Posterior vena cava (tissue), 2 donors: ENCODE measurements at regions of chr2 and their contacts with region 1.

Region 1: GRCh38 chr2:124836430-124836829 is 811.3 kb downstream of the CNTNAP5 start:
- DNase-seq: no peak

Region 2: DNA sequence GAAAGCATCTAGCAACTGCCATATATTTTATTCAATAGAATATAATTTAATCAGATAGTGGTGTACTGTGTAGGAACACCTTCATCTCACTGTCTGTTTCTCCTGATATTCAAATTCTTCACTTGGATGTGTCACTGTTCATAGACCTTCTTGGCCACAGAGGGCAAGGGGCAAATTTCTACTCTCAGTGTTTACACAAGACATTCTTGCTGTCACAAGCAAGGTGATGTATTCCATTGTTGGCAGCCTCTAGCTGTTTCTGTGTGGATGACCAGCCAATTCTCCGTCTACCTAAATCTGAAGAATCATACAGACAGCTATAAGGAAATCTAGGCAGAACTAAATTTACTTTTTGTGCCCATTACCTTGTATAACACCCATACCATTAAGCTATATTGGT is 137.0 kb after region 1 on chr2:
- intact Hi-C with region 1: loop called in 1 of 2 experiments (anchors 5 kb)
- DNase-seq: no peak

Region 3: GRCh38 chr2:125444106-125444505 is 607.7 kb after region 1 on chr2:
- intact Hi-C with region 1: no loop called
- DNase-seq: no peak